ENCODE measurements at regions of chr17 and their contacts with region 1.

Region 1: DNA sequence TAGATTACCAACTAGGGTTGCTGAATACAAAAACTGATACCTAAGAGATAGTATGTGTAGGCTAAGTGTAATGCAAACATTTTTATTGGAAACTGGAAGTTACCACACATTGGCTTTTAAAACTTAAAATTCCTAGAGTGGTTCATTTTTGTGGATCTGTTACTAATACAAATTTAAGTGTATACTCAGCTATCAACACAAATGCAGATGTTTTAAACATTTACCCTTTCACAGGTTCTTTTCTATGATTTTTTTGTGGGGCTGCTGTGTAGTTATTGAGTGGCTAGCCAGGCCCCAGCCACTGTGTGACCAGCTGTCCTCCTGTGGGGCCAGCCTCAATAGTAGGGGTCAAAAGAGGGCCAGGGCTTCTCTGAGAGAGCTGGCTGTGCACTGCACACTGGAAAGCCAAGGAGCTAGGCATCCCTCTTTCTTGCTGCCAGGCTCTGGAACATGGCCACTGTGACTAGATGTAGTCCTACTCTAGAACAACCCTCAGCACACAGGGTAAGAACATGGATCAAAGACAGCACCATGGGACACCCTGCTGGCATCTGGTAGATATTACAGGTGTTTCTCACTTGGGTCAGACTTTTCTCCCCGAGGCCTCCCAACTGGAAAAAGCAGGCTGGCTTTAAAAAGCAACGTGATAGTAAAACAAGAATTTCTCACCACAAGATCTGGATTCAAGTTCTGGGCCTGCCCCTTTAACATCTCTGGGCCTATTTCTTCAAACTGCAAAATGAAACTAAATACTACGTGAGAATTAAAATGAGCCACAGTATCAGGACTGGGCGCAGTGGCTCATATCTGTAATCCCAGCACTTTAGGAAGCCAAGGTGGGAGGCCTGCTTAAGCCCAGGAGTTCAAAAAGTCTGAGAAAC is 7.3 kb upstream of the VEZF1 start:
- DNase-seq: peak; percentile 79
- H3K4me3 ChIP-seq: no peak overlapping the region
- H3K27ac ChIP-seq: peak overlapping the region; percentile 18 to 33; a peak in 3 of 4 replicates
- H3K4me1 ChIP-seq: peaks cover 0 to 13% of the 10 kb centered on the region in 2 experiments; a peak in 2 of 4 replicates
- H3K27me3 ChIP-seq: no peaks in the 10 kb centered on the region
- CTCF ChIP-seq: peak; percentile 87
- EP300 ChIP-seq: no peak
- RAD21 ChIP-seq: peak; percentile 97

Region 2: GRCh38 chr17:57121338-57122042 is 873.8 kb before region 1 on chr17:
- CTCF ChIA-PET with region 1: interaction called, 13 read pairs
- POLR2A ChIA-PET with region 1: no interaction called
- DNase-seq: peak; percentile 80
- H3K4me3 ChIP-seq: no peak overlapping the region
- H3K27ac ChIP-seq: peak overlapping the region in 1 of 2 experiments; percentile 29; a peak in 1 of 4 replicates
- H3K4me1 ChIP-seq: peaks cover 0 to 17% of the 10 kb centered on the region in 2 experiments; a peak in 1 of 4 replicates
- H3K27me3 ChIP-seq: no peaks in the 10 kb centered on the region
- CTCF ChIP-seq: peak; percentile 73
- EP300 ChIP-seq: no peak
- RAD21 ChIP-seq: peak; percentile 76

Region 3: DNA sequence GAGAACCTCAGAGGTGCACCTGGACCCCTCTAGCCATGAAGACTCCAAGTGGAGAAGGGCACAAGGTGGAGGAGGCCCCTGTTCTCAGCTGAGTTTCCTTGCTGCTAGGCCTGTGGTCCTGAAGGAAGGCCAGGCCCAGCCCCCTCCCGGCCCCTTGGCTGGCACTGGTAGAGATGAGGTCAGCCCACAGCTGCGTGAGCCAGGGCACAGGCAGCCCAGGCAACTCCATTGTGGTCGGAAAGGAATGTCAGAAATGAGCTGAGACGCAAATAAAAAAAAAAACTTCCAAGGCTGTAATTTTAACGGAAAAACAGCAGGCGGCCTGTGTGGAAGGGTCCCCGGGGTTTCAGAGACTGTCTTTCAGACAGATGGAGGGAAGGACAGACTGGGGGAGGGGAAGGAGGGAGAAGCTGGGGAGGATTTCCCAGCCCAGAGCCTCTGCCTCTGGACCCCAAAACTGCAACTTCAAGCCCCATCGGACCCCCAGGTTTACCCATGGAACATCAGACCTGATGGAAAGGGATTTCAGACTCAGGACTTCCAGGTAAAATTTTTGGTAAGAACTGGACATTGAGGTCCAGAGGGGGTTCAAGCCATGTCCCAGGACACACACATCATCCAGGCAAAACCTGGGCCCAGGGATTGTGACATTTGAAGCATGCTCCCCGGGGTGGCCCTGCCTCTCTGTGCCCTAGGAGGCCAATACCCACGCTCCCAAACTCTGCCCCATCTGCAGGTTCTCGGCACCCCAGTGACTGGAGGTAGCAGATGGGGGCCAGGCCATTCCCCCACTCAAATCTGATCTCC is 119.8 kb before region 1 on chr17:
- CTCF ChIA-PET with region 1: interaction called, 1,002 read pairs
- POLR2A ChIA-PET with region 1: interaction called, 6 read pairs
- DNase-seq: peak; percentile 70
- H3K4me3 ChIP-seq: peak overlapping the region in 1 of 2 experiments; percentile 51; a peak in 2 of 4 replicates
- H3K27ac ChIP-seq: peak overlapping the region; percentile 87 to 100
- H3K4me1 ChIP-seq: peaks cover 36 to 67% of the 10 kb centered on the region in 2 experiments
- H3K27me3 ChIP-seq: no peaks in the 10 kb centered on the region
- CTCF ChIP-seq: peak; percentile 80
- EP300 ChIP-seq: peak; percentile 60 to 99
- RAD21 ChIP-seq: peak; percentile 55

Region 4: DNA sequence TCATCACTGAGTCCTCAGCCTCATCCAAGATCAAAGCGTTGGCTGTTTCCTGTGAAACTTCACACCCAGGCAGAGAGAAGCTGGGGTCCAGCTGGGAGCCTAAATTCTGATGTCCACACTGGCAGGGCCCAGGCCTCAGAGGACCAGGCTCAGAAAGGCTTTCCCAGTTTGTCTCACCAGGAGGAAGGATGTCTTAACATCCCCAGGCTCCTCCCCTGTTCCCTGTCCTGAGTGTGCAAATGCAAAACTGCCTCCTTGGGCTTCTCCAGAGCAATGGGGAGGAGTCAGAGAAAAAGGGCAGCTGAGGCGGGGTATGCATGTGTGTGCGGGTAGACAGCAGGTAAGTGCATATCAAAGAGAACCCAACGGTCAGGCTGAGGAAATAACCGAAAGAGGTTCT is 85.8 kb before region 1 on chr17:
- CTCF ChIA-PET with region 1: interaction called, 17 read pairs
- POLR2A ChIA-PET with region 1: no interaction called
- DNase-seq: no peak
- H3K4me3 ChIP-seq: no peak overlapping the region
- H3K27ac ChIP-seq: no peak overlapping the region
- H3K4me1 ChIP-seq: peaks cover 5 to 24% of the 10 kb centered on the region in 2 experiments; a peak in 1 of 4 replicates
- H3K27me3 ChIP-seq: no peaks in the 10 kb centered on the region
- CTCF ChIP-seq: no peak
- EP300 ChIP-seq: no peak
- RAD21 ChIP-seq: no peak

Region 5: GRCh38 chr17:57955183-57955931 is 40.0 kb before region 1 on chr17 and contains the start of gene CUEDC1:
- CTCF ChIA-PET with region 1: interaction called, 22 read pairs
- POLR2A ChIA-PET with region 1: interaction called, 4 read pairs
- DNase-seq: peak; percentile 98
- H3K4me3 ChIP-seq: peak within 1 kb of the TSS; percentile 67 to 92
- H3K27ac ChIP-seq: peak within 1 kb of the TSS; percentile 71 to 79
- H3K4me1 ChIP-seq: peaks cover 26 to 41% of the 10 kb centered on the region in 2 experiments; a peak in 3 of 4 replicates
- H3K27me3 ChIP-seq: no peaks in the 10 kb centered on the region
- CTCF ChIP-seq: no peak
- EP300 ChIP-seq: peak in 1 of 2 experiments; percentile 43; a peak in 1 of 4 replicates
- RAD21 ChIP-seq: peak; percentile 17; the same call in 1 of the 2 replicates
- polyA plus RNA-seq, gene CUEDC1: 50.3 and 58.9 TPM in 2 replicates

Region 6: DNA sequence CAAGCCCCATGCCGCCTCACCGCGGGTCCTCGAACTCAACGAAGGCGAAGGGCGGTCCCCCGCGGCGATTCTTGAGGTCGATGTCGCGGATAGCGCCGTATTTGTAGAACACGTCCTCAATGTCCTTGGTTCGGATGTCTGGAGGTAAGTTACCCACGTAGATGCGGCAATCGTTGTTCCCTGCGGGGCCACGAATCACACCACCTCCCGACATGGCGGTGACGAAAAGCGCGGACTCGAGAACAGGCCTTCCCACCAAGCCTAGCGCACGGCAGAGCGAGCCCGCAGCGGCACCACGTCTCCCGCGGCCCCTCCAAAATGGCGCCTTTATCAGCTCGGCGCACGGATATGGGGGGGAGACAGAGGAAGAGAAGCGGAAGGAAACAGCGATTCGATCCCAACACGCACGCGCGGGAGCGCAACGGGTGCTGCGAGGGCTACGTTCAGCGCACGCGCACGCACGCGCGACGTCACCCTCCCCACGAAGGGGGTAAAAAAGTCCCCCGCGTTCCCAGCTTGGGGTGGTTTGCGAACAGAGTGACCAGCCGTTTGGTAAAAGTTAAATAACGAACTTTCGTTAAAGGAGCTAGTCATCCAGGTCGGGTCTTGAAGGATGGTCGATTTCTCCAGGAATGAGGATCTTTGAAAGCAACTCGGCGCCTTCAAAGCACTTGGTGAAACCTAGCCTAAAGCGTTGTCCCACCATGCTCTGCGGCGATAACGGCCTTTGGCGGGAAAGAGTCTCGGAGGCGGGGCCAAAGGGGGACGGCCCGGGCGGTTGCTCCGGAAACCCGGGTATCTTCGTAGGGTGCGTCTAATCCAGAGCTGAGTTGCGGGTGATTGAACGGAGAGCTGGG is 11.8 kb after region 1 on chr17 and contains the start of gene SRSF1:
- CTCF ChIA-PET with region 1: interaction called, 72 read pairs
- POLR2A ChIA-PET with region 1: interaction called, 29 read pairs
- DNase-seq: peak; percentile 97
- H3K4me3 ChIP-seq: peak within 1 kb of the TSS; percentile 98 to 99
- H3K27ac ChIP-seq: peak within 1 kb of the TSS; percentile 98 to 99
- H3K4me1 ChIP-seq: peaks cover 33 to 34% of the 10 kb centered on the region in 2 experiments
- H3K27me3 ChIP-seq: no peaks in the 10 kb centered on the region
- CTCF ChIP-seq: no peak
- EP300 ChIP-seq: peak; percentile 10 to 27; a peak in 2 of 4 replicates
- RAD21 ChIP-seq: no peak
- polyA plus RNA-seq, gene SRSF1: 248 and 291 TPM in 2 replicates

Region 7: GRCh38 chr17:58082870-58083490 is 87.7 kb after region 1 on chr17 and contains the start of gene DYNLL2:
- CTCF ChIA-PET with region 1: interaction called, 26 read pairs
- POLR2A ChIA-PET with region 1: interaction called, 6 read pairs
- DNase-seq: peak; percentile 99
- H3K4me3 ChIP-seq: peak within 1 kb of the TSS; percentile 95 to 99
- H3K27ac ChIP-seq: peak within 1 kb of the TSS; percentile 48 to 91
- H3K4me1 ChIP-seq: peaks cover 18 to 32% of the 10 kb centered on the region in 2 experiments
- H3K27me3 ChIP-seq: no peaks in the 10 kb centered on the region; the same call in 1 of the 2 replicates
- CTCF ChIP-seq: no peak
- EP300 ChIP-seq: no peak; a peak in 1 of 4 replicates
- RAD21 ChIP-seq: no peak
- polyA plus RNA-seq, gene DYNLL2: 27.0 and 27.4 TPM in 2 replicates